ENCODE measurements at regions of chr7 and their contacts with region 1.

Region 1: GRCh38 chr7:74569501-74570075 is 87.9 kb upstream of the GTF2I start:
- DNase-seq: no peak
- ATAC-seq: no peak

Region 2: DNA sequence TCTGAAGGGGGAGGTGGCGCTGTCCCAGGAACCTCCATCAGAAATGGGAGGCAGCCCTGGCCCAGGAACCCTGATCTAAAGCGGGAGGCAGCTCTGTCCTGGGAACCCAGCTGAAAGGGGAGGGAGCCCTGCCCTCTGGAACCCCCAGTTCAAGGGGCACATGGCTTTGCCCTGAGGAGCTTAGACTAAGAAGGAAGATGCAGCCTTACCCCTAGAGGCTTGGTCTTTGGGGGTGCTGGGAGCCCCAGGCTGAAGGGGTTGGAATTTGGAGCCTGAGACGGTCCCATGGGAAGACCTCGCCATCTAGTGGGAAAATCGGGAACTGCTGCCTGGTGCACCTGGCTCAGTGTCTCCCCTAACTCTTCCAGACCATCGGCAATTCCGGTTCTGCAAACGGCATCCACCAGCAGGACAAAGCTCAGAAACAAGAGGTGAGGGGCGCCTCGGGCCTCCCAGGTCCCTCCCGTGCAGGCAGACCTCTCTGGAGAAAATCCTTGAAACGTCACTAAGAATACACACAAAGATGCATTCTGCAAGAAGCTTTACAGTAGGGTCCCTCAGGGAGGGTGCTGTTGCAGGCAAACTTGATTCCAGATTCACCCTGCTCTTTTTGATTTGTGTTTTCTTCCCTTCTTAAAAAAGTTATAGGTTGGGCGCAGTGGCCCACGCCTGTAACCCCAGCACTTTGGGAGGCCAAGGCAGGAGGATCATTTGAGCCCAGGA is 168.3 kb before region 1 on chr7:
- intact Hi-C with region 1: no loop called
- DNase-seq: peak; percentile 72
- ATAC-seq: peak; percentile 51 to 62

Region 3: DNA sequence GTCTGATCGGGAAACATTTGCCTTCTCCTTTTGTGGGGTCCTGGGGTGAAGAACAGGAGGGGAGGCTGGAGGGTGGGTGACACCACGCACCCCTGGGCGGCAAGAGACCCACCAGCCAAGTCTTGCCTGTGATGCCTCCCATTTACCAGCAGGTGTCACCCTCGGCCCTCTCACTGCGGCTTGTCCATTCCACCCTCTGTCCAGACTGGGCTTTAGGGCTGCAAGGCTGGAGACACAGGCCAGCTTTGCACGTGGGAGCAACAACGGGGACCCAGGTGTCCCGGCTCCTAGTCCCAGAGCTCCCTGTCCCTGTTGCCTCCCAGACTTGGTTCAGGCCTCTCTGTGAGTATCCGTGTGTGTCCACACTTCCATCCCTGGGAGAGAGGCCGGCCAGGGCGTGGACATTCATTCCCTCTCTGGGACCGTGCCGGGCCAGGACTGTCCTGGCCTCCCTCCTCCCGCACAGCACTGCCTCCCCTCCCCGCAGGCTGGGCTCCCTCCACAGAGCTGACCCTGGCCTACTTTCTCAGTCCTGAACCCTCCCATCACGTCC is 152.1 kb before region 1 on chr7:
- intact Hi-C with region 1: loop called in 1 of 2 experiments (anchors 5 kb)
- DNase-seq: peak; percentile 72
- ATAC-seq: peak; percentile 94 to 95